SK-N-SH (cell line): ENCODE measurements at regions of chr11 and their contacts with region 1.

Region 1: GRCh38 chr11:128157423-128158298 is 429.7 kb downstream of the ETS1 start:
- DNase-seq: peak; percentile 56
- H3K4me3 ChIP-seq: peak overlapping the region; percentile 28 to 46; a peak in 3 of 4 replicates
- H3K27ac ChIP-seq: peak overlapping the region in 1 of 2 experiments; percentile 55; a peak in 1 of 4 replicates
- H3K4me1 ChIP-seq: no peaks in the 10 kb centered on the region; a peak in 1 of 4 replicates
- H3K27me3 ChIP-seq: no peaks in the 10 kb centered on the region
- CTCF ChIP-seq: peak; percentile 100
- EP300 ChIP-seq: no peak
- RAD21 ChIP-seq: peak; percentile 72

Region 2: GRCh38 chr11:127943763-127944162 is 213.9 kb before region 1 on chr11:
- CTCF ChIA-PET with region 1: no interaction called
- POLR2A ChIA-PET with region 1: no interaction called
- DNase-seq: no peak
- H3K4me3 ChIP-seq: no peak overlapping the region
- H3K27ac ChIP-seq: no peak overlapping the region
- H3K4me1 ChIP-seq: no peaks in the 10 kb centered on the region
- H3K27me3 ChIP-seq: no peaks in the 10 kb centered on the region
- CTCF ChIP-seq: no peak
- EP300 ChIP-seq: no peak
- RAD21 ChIP-seq: no peak

Region 3: GRCh38 chr11:128026596-128026995 is 131.1 kb before region 1 on chr11:
- CTCF ChIA-PET with region 1: interaction called, 43 read pairs
- POLR2A ChIA-PET with region 1: no interaction called
- DNase-seq: no peak
- H3K4me3 ChIP-seq: no peak overlapping the region
- H3K27ac ChIP-seq: peak overlapping the region in 1 of 2 experiments; percentile 69; a peak in 2 of 4 replicates
- H3K4me1 ChIP-seq: peaks cover 5 to 14% of the 10 kb centered on the region in 2 experiments; a peak in 2 of 4 replicates
- H3K27me3 ChIP-seq: no peaks in the 10 kb centered on the region
- CTCF ChIP-seq: no peak
- EP300 ChIP-seq: peak in 1 of 2 experiments; percentile 88; a peak in 2 of 4 replicates
- RAD21 ChIP-seq: no peak

Region 4: GRCh38 chr11:128058580-128059208 is 99.0 kb before region 1 on chr11:
- CTCF ChIA-PET with region 1: interaction called, 11 read pairs
- POLR2A ChIA-PET with region 1: no interaction called
- DNase-seq: no peak
- H3K4me3 ChIP-seq: no peak overlapping the region
- H3K27ac ChIP-seq: no peak overlapping the region
- H3K4me1 ChIP-seq: peaks cover 3 to 12% of the 10 kb centered on the region in 2 experiments; a peak in 3 of 4 replicates
- H3K27me3 ChIP-seq: no peaks in the 10 kb centered on the region
- CTCF ChIP-seq: no peak
- EP300 ChIP-seq: no peak
- RAD21 ChIP-seq: no peak

Region 5: GRCh38 chr11:128172046-128172878 is 14.6 kb after region 1 on chr11:
- CTCF ChIA-PET with region 1: interaction called, 137 read pairs
- POLR2A ChIA-PET with region 1: no interaction called
- DNase-seq: peak; percentile 73
- H3K4me3 ChIP-seq: no peak overlapping the region; a peak in 1 of 4 replicates
- H3K27ac ChIP-seq: peak overlapping the region in 1 of 2 experiments; percentile 50; a peak in 2 of 4 replicates
- H3K4me1 ChIP-seq: peaks cover 3 to 5% of the 10 kb centered on the region in 2 experiments; a peak in 2 of 4 replicates
- H3K27me3 ChIP-seq: no peaks in the 10 kb centered on the region
- CTCF ChIP-seq: peak; percentile 87
- EP300 ChIP-seq: no peak
- RAD21 ChIP-seq: peak; percentile 98

Region 6: GRCh38 chr11:128323381-128323780 is 165.7 kb after region 1 on chr11:
- CTCF ChIA-PET with region 1: no interaction called
- POLR2A ChIA-PET with region 1: no interaction called
- DNase-seq: no peak
- H3K4me3 ChIP-seq: no peak overlapping the region
- H3K27ac ChIP-seq: no peak overlapping the region
- H3K4me1 ChIP-seq: peaks cover 0 to 2% of the 10 kb centered on the region in 2 experiments; a peak in 1 of 4 replicates
- H3K27me3 ChIP-seq: no peaks in the 10 kb centered on the region
- CTCF ChIP-seq: peak; percentile 50
- EP300 ChIP-seq: no peak
- RAD21 ChIP-seq: peak; percentile 59

Region 7: DNA sequence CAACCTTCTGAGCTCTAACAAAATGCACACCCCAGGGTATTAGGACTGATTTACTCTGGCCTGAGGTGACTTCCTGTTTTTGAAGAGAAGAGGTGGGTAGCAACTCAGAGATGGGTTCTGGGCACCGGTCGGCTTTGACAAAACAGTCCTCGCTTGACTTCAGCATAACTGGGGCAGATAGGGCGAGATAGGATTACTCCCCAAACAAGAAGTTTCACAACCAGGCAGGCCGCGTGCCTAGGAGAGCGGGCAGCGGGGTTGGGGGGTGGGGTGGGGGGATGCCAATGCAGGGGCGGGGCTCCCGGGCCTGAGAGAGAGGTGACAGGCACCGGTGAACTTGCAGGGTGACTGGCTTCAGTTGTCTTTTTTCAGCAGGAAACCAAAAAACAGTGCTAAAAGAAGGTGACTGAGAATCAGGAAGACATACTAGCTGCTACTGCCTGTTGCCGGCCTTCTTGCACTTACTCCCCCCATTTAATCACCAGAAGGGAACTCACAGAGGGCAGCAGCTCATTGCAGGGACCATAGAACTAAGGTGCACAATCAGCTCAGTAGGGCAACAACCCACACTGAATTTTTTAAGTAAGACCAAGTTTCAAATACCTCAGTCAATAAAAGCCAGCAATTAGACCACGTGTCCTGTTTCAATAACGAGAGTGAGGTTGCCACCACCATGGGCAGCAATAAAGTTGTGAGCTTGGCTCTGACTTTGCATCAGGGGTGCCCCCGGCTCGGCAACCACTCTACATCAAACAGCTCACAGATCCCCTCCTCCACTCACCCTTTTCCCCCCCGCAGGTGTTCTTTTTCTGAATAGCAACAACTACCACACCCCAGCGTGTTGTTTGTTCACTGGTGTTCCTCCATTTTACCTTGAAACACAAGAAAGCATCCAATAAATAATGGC is 466.9 kb after region 1 on chr11:
- CTCF ChIA-PET with region 1: interaction called, 98 read pairs
- POLR2A ChIA-PET with region 1: no interaction called
- DNase-seq: no peak
- H3K4me3 ChIP-seq: no peak overlapping the region
- H3K27ac ChIP-seq: no peak overlapping the region
- H3K4me1 ChIP-seq: peaks cover 0 to 22% of the 10 kb centered on the region in 2 experiments; a peak in 2 of 4 replicates
- H3K27me3 ChIP-seq: no peaks in the 10 kb centered on the region
- CTCF ChIP-seq: no peak
- EP300 ChIP-seq: no peak
- RAD21 ChIP-seq: no peak

Region 8: DNA sequence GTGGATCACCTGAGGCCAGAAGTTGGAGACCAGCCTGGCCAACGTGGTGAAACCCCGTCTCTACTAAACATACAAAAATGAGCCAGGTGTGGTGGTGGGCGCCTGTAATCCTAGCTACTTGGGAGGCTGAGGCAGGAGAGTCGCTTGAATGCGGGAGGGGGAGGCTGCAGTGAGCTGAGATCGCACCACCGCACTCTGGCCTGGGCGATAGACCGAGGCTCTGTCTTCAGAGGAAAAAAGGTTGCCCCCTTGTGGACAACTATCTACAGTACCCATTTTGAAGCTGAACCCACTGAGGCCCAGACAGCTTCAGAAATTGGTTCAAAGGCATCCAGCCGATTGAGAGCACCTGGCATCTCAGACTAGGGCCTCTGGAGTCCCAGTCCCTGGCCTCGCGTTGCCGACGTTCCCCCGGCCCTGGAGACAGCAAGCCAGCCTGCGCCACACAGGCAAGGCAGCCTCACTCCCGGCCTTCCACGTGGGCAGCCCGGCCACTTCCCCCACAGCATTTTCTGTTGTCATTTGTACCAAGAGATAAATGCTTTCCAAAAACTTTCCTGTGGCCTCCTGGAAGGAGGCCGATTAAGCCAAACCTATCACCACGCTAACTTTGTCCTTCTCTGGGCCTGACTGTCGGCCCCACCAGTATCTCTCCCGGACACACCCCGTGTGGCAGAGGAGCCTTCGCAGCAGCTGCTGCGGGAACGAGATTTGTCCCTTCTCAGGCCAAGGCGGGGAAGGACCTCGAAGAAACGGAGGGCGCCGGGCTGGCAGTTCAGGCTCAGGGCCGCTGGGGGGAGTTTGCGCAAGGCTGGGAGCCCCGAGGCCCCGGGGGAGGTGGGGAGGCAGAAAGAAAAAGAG is 619.0 kb after region 1 on chr11:
- CTCF ChIA-PET with region 1: interaction called, 11 read pairs
- POLR2A ChIA-PET with region 1: no interaction called
- DNase-seq: peak; percentile 87
- H3K4me3 ChIP-seq: peak overlapping the region in 1 of 2 experiments; percentile 25; a peak in 1 of 4 replicates
- H3K27ac ChIP-seq: peak overlapping the region in 1 of 2 experiments; percentile 64; a peak in 1 of 4 replicates
- H3K4me1 ChIP-seq: peaks cover 0 to 19% of the 10 kb centered on the region in 2 experiments; a peak in 1 of 4 replicates
- H3K27me3 ChIP-seq: no peaks in the 10 kb centered on the region
- CTCF ChIP-seq: peak; percentile 44
- EP300 ChIP-seq: no peak
- RAD21 ChIP-seq: peak; percentile 24